ENCODE measurements at regions of chr20 and their contacts with region 1.

Region 1: GRCh38 chr20:9884061-9884460 is 45.2 kb upstream of the PAK5 start:
- DNase-seq: no peak
- H3K4me3 ChIP-seq: no peak overlapping the region
- H3K27ac ChIP-seq: no peak overlapping the region
- H3K4me1 ChIP-seq: no peaks in the 10 kb centered on the region
- H3K27me3 ChIP-seq: no peaks in the 10 kb centered on the region
- CTCF ChIP-seq: peak; percentile 8 to 61

Region 2: DNA sequence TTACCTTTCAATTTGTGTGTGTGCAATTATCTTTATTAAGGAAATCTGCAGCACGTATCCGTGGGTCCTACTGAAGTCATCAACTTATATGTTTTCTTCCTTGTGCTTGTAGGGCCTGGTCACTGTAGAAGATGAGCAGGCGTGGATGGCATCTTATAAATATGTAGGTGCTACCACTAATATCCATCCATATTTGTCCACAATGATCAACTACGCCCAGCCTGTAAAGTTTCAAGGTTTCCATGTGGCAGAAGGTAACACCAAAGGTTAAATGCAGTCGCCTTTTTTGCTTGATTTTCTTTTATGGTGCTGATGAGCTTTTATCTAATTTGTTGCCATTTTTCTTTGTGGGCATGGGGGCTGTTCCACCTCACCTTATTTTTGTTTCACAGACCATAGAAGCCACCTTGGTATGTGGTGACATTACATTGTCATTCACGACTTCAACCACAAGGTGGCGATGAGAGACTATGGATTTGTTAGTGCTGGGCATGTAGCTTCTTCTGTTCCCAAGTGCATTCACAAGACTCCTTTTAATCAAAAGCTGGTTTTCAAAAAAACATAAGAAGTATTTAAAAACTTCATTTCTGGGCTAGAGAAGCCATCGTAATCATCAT is 476.1 kb before region 1 on chr20:
- CTCF ChIA-PET with region 1: no interaction called
- dilution Hi-C with region 1: no loop called
- in situ Hi-C with region 1: loop called in 1 of 2 experiments (anchors 25 kb)
- intact Hi-C with region 1: loop called (anchors 5 kb)
- DNase-seq: peak; percentile 53
- H3K4me3 ChIP-seq: no peak overlapping the region
- H3K27ac ChIP-seq: no peak overlapping the region
- H3K4me1 ChIP-seq: peaks cover 9% of the 10 kb centered on the region
- H3K27me3 ChIP-seq: no peaks in the 10 kb centered on the region
- CTCF ChIP-seq: peak; percentile 71 to 80

Region 3: DNA sequence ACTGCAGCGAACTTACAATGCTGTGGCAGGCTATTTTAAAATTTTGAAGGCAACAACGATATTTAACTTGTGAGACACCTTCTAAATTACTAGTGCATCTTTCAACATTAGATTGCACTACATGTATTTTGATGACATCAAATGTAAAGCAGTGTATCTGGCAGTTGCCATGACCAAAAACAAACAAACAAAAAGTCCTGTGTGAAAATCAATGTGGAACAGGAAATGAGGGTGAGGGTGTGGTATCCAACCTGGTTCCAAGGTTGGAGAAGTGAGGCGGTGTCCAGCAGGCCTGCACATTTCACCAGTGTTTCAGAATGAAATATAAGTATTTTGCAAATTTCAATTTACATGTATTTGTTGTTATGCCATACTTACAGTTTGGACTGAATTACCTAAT is 257.7 kb before region 1 on chr20:
- CTCF ChIA-PET with region 1: no interaction called
- dilution Hi-C with region 1: no loop called
- in situ Hi-C with region 1: loop called in 1 of 2 experiments (anchors 10 kb)
- intact Hi-C with region 1: no loop called
- DNase-seq: peak; percentile 34
- H3K4me3 ChIP-seq: no peak overlapping the region
- H3K27ac ChIP-seq: no peak overlapping the region
- H3K4me1 ChIP-seq: no peaks in the 10 kb centered on the region
- H3K27me3 ChIP-seq: no peaks in the 10 kb centered on the region
- CTCF ChIP-seq: no peak

Region 4: GRCh38 chr20:9928281-9928737 is 44.2 kb after region 1 on chr20:
- CTCF ChIA-PET with region 1: no interaction called
- dilution Hi-C with region 1: no loop called
- in situ Hi-C with region 1: no loop called
- intact Hi-C with region 1: no loop called
- DNase-seq: no peak
- H3K4me3 ChIP-seq: no peak overlapping the region
- H3K27ac ChIP-seq: no peak overlapping the region
- H3K4me1 ChIP-seq: peaks cover 17% of the 10 kb centered on the region
- H3K27me3 ChIP-seq: no peaks in the 10 kb centered on the region
- CTCF ChIP-seq: no peak

Region 5: GRCh38 chr20:9966966-9967365 is 82.9 kb after region 1 on chr20:
- CTCF ChIA-PET with region 1: no interaction called
- dilution Hi-C with region 1: no loop called
- in situ Hi-C with region 1: no loop called
- intact Hi-C with region 1: no loop called
- DNase-seq: peak; percentile 12
- H3K4me3 ChIP-seq: no peak overlapping the region
- H3K27ac ChIP-seq: no peak overlapping the region
- H3K4me1 ChIP-seq: peaks cover 6% of the 10 kb centered on the region
- H3K27me3 ChIP-seq: no peaks in the 10 kb centered on the region
- CTCF ChIP-seq: peak; percentile 51 to 53

Region 6: DNA sequence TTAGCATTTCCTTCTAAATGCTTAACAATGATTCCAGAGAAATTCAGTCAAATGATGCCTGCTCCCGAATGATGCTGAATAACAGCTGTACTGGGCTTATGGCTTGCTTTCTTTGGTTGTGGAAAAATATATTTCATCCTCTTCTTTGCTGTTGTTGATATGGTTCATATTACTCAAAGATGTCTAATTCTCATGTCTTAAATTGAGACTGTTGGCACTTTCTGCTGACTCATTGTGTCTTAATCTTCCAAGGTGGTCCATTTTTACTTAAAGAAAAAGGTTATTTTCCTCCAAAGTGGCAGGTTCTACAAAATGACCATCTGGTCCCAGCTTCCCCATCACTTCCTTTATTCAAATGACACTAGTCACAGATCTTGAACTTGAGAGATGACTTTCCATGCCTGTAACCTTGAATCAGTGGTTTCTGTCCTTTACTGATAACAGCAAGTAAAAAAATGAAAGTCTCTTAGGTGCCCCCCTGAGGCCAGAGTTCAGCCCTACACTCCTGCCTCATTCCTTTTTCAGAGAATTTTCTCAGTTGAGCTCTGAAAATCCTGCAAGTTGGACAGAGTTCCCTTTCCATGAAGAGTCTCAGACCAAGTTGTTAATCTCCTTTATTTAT is 341.5 kb after region 1 on chr20:
- CTCF ChIA-PET with region 1: no interaction called
- dilution Hi-C with region 1: no loop called
- in situ Hi-C with region 1: no loop called
- intact Hi-C with region 1: no loop called
- DNase-seq: no peak
- H3K4me3 ChIP-seq: no peak overlapping the region
- H3K27ac ChIP-seq: no peak overlapping the region
- H3K4me1 ChIP-seq: peaks cover 5% of the 10 kb centered on the region
- H3K27me3 ChIP-seq: no peaks in the 10 kb centered on the region
- CTCF ChIP-seq: peak; percentile 14 to 20